ENCODE measurements at regions of chr4 and their contacts with region 1.

Region 1: DNA sequence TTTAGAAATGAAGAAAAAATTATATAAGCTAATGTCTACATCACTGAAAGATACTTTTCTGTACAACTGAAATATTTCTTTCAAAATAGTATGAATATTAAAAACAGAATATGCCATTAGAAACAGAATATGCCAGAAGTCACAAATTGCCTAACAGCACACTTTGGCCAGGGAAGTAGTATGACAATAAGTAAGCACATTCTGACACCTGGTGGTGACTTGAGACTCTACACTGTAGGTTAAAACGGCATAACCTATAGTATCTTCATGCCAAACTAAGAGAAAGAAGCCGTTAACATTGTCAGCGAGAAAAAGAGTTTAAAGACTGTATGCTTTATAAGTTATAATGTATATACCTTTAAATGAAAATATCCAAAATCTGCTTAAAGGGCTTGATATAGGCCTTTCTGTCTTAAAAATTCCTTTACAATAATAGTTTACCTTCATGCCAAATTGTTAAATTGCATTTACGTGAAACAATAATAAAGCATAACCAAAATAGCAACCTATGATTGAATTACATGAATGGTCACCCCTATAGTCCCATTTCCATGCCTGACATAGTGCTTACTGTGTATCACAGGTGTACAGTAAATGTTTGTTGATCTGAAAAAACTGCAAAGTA is 32.8 kb downstream of the FAM13A start:
- DNase-seq: peak; percentile 77
- H3K4me3 ChIP-seq: no peak overlapping the region
- H3K27ac ChIP-seq: no peak overlapping the region
- H3K4me1 ChIP-seq: no peaks in the 10 kb centered on the region
- H3K27me3 ChIP-seq: no peaks in the 10 kb centered on the region
- CTCF ChIP-seq: peak; percentile 59

Region 2: GRCh38 chr4:88706574-88706973 is 317.6 kb before region 1 on chr4:
- intact Hi-C with region 1: loop called (anchors 10 kb)
- DNase-seq: no peak
- H3K4me3 ChIP-seq: no peak overlapping the region
- H3K27ac ChIP-seq: no peak overlapping the region
- H3K4me1 ChIP-seq: no peaks in the 10 kb centered on the region
- H3K27me3 ChIP-seq: no peaks in the 10 kb centered on the region
- CTCF ChIP-seq: no peak

Region 3: DNA sequence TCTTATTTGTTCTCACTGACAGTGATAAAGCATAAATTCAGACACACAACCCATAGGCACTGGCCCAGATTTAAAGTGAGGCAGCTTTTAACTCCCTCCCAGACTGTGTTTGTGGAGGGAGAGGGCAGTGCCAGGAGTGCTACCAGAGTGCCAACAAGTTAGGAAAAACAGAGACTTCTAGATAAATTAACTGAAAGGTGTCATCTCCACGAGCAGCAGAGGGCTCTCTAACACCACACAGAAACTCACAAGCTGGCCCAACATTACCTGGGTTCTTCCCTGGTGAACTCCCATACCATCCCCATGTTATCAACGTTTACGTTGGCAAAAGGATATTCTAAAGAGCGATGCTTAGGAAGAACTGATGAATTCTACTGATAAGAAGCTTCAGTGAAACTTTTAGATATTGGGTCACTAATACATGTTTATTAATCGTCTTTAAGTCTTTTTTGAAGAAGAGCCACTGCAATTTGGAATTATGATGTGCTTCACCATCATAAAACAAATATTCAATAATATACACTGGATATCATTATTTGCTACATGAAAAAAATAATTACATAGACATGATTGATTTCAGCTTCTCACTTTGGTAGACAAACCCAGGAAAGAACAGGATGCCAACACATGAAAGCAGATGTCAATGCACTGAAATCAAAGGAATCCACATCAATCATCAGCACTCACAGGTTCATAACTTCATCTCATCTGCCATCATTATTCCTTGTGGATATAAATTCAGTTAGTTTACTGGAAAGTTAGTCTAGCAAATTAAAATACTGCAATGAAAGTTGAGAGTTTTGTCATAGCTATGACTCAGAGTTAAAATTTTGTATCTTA is 205.3 kb before region 1 on chr4:
- intact Hi-C with region 1: loop called (anchors 2 kb)
- DNase-seq: peak; percentile 69
- H3K4me3 ChIP-seq: no peak overlapping the region
- H3K27ac ChIP-seq: no peak overlapping the region
- H3K4me1 ChIP-seq: peaks cover 5% of the 10 kb centered on the region
- H3K27me3 ChIP-seq: no peaks in the 10 kb centered on the region
- CTCF ChIP-seq: peak; percentile 50

Region 4: GRCh38 chr4:88938135-88938534 is 86.0 kb before region 1 on chr4:
- intact Hi-C with region 1: no loop called
- DNase-seq: no peak
- H3K4me3 ChIP-seq: no peak overlapping the region
- H3K27ac ChIP-seq: no peak overlapping the region
- H3K4me1 ChIP-seq: no peaks in the 10 kb centered on the region
- H3K27me3 ChIP-seq: no peaks in the 10 kb centered on the region
- CTCF ChIP-seq: no peak

Measured in colonic mucosa (tissue), 4 donors.